Activated CD8-positive, alpha-beta T cell treated with anti-CD3 and anti-CD28 coated beads, Interleukin-2, amount 10 ng/mL, durations not matched to agents 7 days and 5 days (primary cell): ENCODE measurements at regions of chr17 and their contacts with region 1.

Region 1: GRCh38 chr17:74748529-74749365 is at the start of gene NHERF1:
- DNase-seq: peak; percentile 95
- ATAC-seq: peak; percentile 90
- H3K4me3 Mint-ChIP-seq: peak within 1 kb of the TSS; percentile 99
- H3K27ac Mint-ChIP-seq: peak within 1 kb of the TSS; percentile 90
- H3K4me1 Mint-ChIP-seq: peaks cover 55% of the 10 kb centered on the region
- H3K27me3 Mint-ChIP-seq: no peaks in the 10 kb centered on the region
- total RNA-seq, gene NHERF1: 286 to 296 TPM

Region 2: GRCh38 chr17:74605361-74605760 is 143.4 kb before region 1 on chr17:
- CTCF ChIA-PET with region 1: no interaction called
- POLR2A ChIA-PET with region 1: no interaction called
- DNase-seq: no peak
- ATAC-seq: no peak
- H3K4me3 Mint-ChIP-seq: no peak overlapping the region
- H3K27ac Mint-ChIP-seq: no peak overlapping the region
- H3K4me1 Mint-ChIP-seq: peaks cover 22% of the 10 kb centered on the region
- H3K27me3 Mint-ChIP-seq: peaks cover 34% of the 10 kb centered on the region

Region 3: GRCh38 chr17:74728033-74728701 is 20.6 kb before region 1 on chr17:
- CTCF ChIA-PET with region 1: no interaction called
- POLR2A ChIA-PET with region 1: no interaction called
- DNase-seq: no peak
- ATAC-seq: no peak
- H3K4me3 Mint-ChIP-seq: no peak overlapping the region
- H3K27ac Mint-ChIP-seq: no peak overlapping the region
- H3K4me1 Mint-ChIP-seq: peaks cover 30% of the 10 kb centered on the region
- H3K27me3 Mint-ChIP-seq: peaks cover 16% of the 10 kb centered on the region

Region 4: GRCh38 chr17:74770498-74771318 is 22.0 kb after region 1 on chr17:
- CTCF ChIA-PET with region 1: interaction called, 73 read pairs
- POLR2A ChIA-PET with region 1: interaction called, 19 read pairs
- DNase-seq: peak; percentile 77
- ATAC-seq: peak; percentile 78
- H3K4me3 Mint-ChIP-seq: no peak overlapping the region
- H3K27ac Mint-ChIP-seq: peak overlapping the region; percentile 61
- H3K4me1 Mint-ChIP-seq: peaks cover 46% of the 10 kb centered on the region
- H3K27me3 Mint-ChIP-seq: no peaks in the 10 kb centered on the region

Region 5: GRCh38 chr17:74776044-74776977 is 27.6 kb after region 1 on chr17 and contains the start of gene NAT9:
- CTCF ChIA-PET with region 1: interaction called, 73 read pairs
- POLR2A ChIA-PET with region 1: interaction called, 19 read pairs
- DNase-seq: peak; percentile 99
- ATAC-seq: peak; percentile 83
- H3K4me3 Mint-ChIP-seq: peak within 1 kb of the TSS; percentile 97
- H3K27ac Mint-ChIP-seq: peak within 1 kb of the TSS; percentile 89
- H3K4me1 Mint-ChIP-seq: peaks cover 70% of the 10 kb centered on the region
- H3K27me3 Mint-ChIP-seq: no peaks in the 10 kb centered on the region
- total RNA-seq, gene NAT9: 28.3 to 30.7 TPM

Region 6: DNA sequence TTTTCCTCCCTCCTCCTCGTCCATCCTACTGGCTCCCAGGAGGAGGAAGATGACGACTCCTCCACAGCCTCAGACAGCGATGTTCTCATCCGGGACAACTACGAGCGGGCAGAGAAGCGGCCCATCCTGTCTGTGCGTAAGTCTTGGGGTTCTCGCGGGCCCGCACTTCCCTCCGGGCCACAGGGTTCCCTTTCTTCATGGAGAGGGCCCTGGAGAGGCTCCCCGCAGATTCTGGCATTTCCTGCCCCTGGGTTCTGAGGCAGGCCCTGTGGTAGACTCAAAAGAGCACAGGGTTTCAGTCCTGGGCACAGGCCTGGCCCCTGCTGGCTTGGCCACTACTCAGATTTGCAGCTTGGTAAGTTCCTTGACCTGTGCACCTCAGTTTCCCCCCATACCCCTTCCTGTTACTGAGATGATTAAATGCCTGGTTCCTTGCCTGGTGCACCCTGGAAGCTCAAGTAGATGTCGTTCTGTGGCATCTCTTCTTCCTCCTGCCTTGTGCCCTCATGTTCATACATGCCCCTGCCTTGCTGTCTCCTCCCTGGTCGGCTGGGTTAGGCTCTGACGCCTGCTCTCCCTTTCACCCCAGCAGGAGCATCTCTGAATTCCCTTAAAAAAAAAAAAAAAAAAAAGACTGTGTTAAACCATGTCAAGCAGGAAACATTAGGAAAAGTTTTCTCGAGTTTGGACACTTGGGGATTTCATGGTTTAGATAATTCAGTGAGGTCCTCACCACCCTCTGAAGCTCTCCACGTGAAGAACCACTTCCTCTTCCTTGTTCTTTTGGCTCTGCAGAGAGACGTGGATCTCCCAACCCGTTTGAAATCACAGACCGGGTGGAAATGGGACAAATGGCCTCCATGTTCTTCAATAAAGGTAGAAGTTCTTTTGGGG is 41.7 kb after region 1 on chr17:
- CTCF ChIA-PET with region 1: interaction called, 54 read pairs
- POLR2A ChIA-PET with region 1: interaction called, 5 read pairs
- DNase-seq: no peak
- ATAC-seq: peak; percentile 19
- H3K4me3 Mint-ChIP-seq: peak overlapping the region; percentile 39
- H3K27ac Mint-ChIP-seq: peak overlapping the region; percentile 68
- H3K4me1 Mint-ChIP-seq: peaks cover 47% of the 10 kb centered on the region
- H3K27me3 Mint-ChIP-seq: no peaks in the 10 kb centered on the region

Region 7: GRCh38 chr17:74864866-74865395 is 116.2 kb after region 1 on chr17:
- CTCF ChIA-PET with region 1: interaction called, 43 read pairs
- POLR2A ChIA-PET with region 1: interaction called, 3 read pairs
- DNase-seq: peak; percentile 80
- ATAC-seq: peak; percentile 60
- H3K4me3 Mint-ChIP-seq: no peak overlapping the region
- H3K27ac Mint-ChIP-seq: no peak overlapping the region
- H3K4me1 Mint-ChIP-seq: peaks cover 23% of the 10 kb centered on the region
- H3K27me3 Mint-ChIP-seq: peaks cover 18% of the 10 kb centered on the region